ENCODE measurements at regions of chr11 and their contacts with region 1.

Region 1: DNA sequence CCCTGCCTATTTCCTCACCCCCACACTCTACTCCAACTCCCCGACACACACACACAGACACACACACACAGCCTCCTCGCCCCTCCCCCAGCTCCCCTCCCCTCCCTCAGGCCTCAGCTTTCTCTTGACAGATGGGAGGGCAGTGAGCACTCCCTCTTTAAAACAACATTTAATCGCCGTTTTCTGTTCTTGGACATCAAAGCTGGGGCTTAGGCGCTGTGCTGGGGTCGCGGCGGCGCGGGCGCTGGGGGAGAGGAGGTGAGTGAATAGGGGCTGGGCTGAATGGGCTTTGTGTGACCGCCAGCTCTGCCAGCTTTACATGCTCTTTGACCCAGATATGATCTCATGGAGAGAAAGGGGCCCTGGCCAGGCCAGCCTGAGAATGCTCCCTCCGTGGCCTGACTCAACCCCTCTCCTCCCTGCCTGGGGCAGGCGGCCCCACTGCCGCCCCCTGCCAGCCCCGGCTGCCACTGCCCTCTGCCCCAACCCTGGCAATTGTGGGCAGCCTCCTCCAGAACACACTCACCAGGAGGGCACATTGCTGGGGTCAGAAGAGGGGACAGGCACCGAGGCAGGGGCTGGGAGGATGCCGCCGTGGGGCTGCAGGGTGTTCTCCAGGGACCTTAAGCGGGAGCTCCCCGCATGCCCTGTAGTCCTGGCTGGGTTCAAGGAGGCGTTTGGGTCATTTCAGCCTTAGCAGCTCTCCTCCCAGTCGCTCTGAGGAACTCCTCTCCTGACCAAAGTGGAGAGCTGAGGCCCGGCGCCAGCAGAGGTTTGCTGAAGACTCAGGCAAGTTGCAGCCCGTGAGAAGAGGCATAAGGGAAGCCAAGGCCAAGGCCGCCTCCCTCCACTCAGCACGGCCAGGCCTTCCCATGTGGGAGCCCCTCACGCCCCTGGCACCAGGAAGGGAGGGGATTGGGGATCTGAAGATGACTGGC is 38.3 kb upstream of the NNMT start:
- DNase-seq: no peak
- H3K4me3 ChIP-seq: peak overlapping the region in 3 of 4 donors; percentile 29 to 38 (median 30)
- H3K27ac ChIP-seq: peak overlapping the region; percentile 46 to 88 (median 72)
- H3K4me1 ChIP-seq: peaks cover 17 to 57% (median 41%) of the 10 kb centered on the region in 3 donors
- H3K27me3 ChIP-seq: peaks cover 0 to 3% (median 0%) of the 10 kb centered on the region in 4 donors
- CTCF ChIP-seq: peak in 1 of 6 experiments; percentile 14
- POLR2A ChIP-seq: no peak

Region 2: DNA sequence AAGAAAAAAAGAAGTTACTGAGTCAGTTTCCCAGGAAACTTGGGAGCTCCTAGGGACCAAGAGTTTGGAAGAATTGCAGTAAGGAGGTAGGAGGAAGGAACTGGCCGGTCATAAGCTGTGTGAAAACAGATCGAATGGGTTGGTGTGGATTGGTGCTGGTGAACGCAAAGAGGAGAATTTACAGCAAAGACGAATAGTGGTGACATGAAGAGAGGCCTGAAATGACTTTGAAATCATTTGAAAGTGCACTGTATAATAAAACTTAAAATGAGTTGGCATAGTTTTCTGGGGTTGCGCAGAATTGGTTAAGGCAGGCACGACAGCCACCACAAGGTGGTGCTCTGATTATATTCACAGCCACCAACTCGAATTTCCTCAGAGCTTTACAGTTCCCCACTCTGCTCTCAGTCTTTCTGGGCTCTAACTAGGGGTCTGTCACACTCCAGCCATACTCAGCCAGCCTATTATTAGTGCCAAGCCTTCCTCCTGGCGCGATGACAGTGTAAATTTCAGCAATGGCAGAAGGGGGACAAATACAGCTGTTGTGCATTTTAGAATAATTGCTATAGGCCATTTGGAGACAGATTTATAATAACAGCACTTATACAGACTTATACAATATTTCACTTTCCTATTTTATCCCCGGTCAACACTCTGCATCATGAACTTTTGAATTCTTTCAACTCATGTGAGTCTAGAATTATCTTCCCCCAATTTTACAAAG is 361.6 kb before region 1 on chr11:
- intact Hi-C with region 1: loop called (anchors 5 kb)
- DNase-seq: no peak
- H3K4me3 ChIP-seq: no peak overlapping the region
- H3K27ac ChIP-seq: no peak overlapping the region
- H3K4me1 ChIP-seq: no peaks in the 10 kb centered on the region
- H3K27me3 ChIP-seq: no peaks in the 10 kb centered on the region
- CTCF ChIP-seq: peak; percentile 51 to 82 (median 68)
- POLR2A ChIP-seq: no peak

Region 3: DNA sequence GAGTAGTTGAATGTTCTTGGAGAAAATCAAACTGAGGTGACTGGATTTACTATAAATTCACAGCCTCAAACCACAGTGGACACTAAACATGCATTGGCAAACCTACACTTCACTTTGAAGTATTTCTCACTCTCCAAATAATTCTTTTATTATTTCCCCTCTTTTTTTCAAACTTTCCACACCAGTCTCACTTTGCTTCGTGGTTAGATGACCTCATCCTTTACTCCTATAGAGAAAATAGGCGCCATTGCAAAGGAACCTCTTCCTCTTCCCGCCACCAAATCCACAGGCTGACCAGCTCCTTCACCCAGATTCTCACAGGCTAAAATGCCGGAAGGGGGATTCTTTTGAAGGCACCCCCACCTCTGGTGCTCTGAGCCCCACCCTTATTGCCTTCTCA is 249.6 kb before region 1 on chr11:
- intact Hi-C with region 1: no loop called
- DNase-seq: no peak
- H3K4me3 ChIP-seq: no peak overlapping the region
- H3K27ac ChIP-seq: no peak overlapping the region
- H3K4me1 ChIP-seq: no peaks in the 10 kb centered on the region
- H3K27me3 ChIP-seq: peaks cover 0 to 20% (median 0%) of the 10 kb centered on the region in 4 donors
- CTCF ChIP-seq: no peak
- POLR2A ChIP-seq: no peak

Measured in esophagus squamous epithelium (tissue), 5 donors.